ENCODE measurements at regions of chr18 and their contacts with region 1.

Region 1: GRCh38 chr18:2540575-2540974 is 30.7 kb downstream of the METTL4 start:
- DNase-seq: no peak
- ATAC-seq: no peak
- H3K4me3 ChIP-seq: no peak overlapping the region
- H3K27ac ChIP-seq: no peak overlapping the region
- H3K4me1 ChIP-seq: no peaks in the 10 kb centered on the region
- H3K27me3 ChIP-seq: no peaks in the 10 kb centered on the region
- CTCF ChIP-seq: no peak

Region 2: GRCh38 chr18:2337552-2338141 is 202.9 kb before region 1 on chr18:
- CTCF ChIA-PET with region 1: no interaction called
- POLR2A ChIA-PET with region 1: no interaction called
- in situ Hi-C with region 1: no loop called
- intact Hi-C with region 1: loop called (anchors 5 kb)
- DNase-seq: peak; percentile 17
- ATAC-seq: no peak
- H3K4me3 ChIP-seq: no peak overlapping the region
- H3K27ac ChIP-seq: no peak overlapping the region
- H3K4me1 ChIP-seq: no peaks in the 10 kb centered on the region
- H3K27me3 ChIP-seq: no peaks in the 10 kb centered on the region
- CTCF ChIP-seq: peak; percentile 57

Measured in Panc1 (cell line).